Endothelial cell of umbilical vein (primary cell): ENCODE measurements at regions of chr14 and their contacts with region 1.

Region 1: DNA sequence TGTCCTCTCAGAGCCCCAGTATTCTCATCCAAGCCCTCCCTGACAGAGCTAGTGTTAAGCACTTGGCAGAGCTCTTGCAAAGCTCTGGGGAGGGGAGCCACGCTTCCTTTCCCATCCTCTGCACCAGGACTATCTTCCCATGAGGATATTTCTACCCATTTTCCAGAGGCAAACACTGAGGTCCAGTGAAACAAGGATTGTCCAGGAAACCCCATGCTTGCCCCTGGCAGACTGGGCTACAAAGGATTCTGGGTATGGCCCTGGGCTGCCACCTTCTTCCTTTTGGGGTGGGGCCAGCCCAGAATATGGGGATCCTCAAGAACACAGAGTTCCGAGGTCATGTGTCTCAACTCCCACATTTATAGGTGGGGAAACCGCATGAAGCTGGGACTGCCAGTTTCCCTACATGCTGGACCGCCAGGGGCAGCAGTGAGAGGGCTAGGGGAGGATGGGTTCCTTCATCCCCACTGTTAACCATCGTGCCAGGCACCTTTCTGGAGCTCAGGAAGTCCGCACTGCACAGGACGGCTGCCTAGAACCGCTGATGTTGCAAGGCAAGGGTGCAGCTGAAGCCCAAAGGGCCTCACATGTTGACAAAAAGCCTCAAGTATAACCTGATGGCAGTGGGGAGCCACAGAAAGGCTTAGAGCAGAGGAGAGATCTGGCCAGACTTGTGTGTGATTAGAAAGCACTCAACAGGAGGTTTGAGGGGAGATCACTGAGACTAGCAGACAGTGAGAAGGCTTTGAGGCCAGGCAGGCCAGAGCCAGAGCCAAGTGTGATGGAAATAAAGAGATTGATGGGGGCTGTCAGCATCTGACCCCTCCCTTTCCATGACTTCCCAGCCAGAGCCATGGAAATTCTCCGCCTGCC is 5.5 kb upstream of the CCDC85C start:
- DNase-seq: no peak
- H3K4me3 ChIP-seq: no peak overlapping the region
- H3K27ac ChIP-seq: no peak overlapping the region
- H3K4me1 ChIP-seq: no peaks in the 10 kb centered on the region
- H3K27me3 ChIP-seq: no peaks in the 10 kb centered on the region
- CTCF ChIP-seq: peak in 1 of 2 donors; percentile 33
- POLR2A ChIP-seq: no peak

Region 2: GRCh38 chr14:99619835-99620834 is 10.7 kb after region 1 on chr14:
- CTCF ChIA-PET with region 1: interaction called, 61 read pairs
- POLR2A ChIA-PET with region 1: interaction called, 3 read pairs
- dilution Hi-C with region 1: no loop called
- intact Hi-C with region 1: loop called (anchors 1 kb)
- DNase-seq: peak; percentile 89
- H3K4me3 ChIP-seq: peak overlapping the region in 1 of 3 experiments; percentile 2
- H3K27ac ChIP-seq: peak overlapping the region; percentile 95
- H3K4me1 ChIP-seq: peaks cover 40% of the 10 kb centered on the region
- H3K27me3 ChIP-seq: no peaks in the 10 kb centered on the region
- CTCF ChIP-seq: no peak
- POLR2A ChIP-seq: no peak